CD4-positive, alpha-beta memory T cell (primary cell): ENCODE measurements at regions of chrX and their contacts with region 1.

Region 1: GRCh38 chrX:39261446-39262147 is 460.3 kb downstream of the MID1IP1 start:
- DNase-seq: peak; percentile 28 to 47 (median 34)
- H3K4me3 ChIP-seq: no peak overlapping the region
- H3K4me3 Mint-ChIP-seq: no peak overlapping the region
- H3K27ac ChIP-seq: no peak overlapping the region
- H3K27ac Mint-ChIP-seq: peak overlapping the region in 3 of 7 donors; percentile 7 to 68 (median 27)
- H3K4me1 ChIP-seq: no peaks in the 10 kb centered on the region
- H3K4me1 Mint-ChIP-seq: peaks cover 0 to 6% (median 5%) of the 10 kb centered on the region in 4 donors
- H3K27me3 ChIP-seq: no peaks in the 10 kb centered on the region
- H3K27me3 Mint-ChIP-seq: no peaks in the 10 kb centered on the region

Region 2: GRCh38 chrX:39309018-39309635 is 47.5 kb after region 1 on chrX:
- CTCF ChIA-PET with region 1: no interaction called
- POLR2A ChIA-PET with region 1: interaction called, 3 read pairs
- intact Hi-C with region 1: loop called (anchors 5 kb)
- DNase-seq: peak; percentile 17 to 82 (median 36)
- H3K4me3 ChIP-seq: no peak overlapping the region
- H3K4me3 Mint-ChIP-seq: peak overlapping the region in 7 of 8 donors; percentile 37 to 86 (median 62)
- H3K27ac ChIP-seq: peak overlapping the region; percentile 69
- H3K27ac Mint-ChIP-seq: peak overlapping the region; percentile 91 to 99 (median 96)
- H3K4me1 ChIP-seq: peaks cover 54% of the 10 kb centered on the region
- H3K4me1 Mint-ChIP-seq: peaks cover 28 to 62% (median 48%) of the 10 kb centered on the region in 4 donors
- H3K27me3 ChIP-seq: no peaks in the 10 kb centered on the region
- H3K27me3 Mint-ChIP-seq: no peaks in the 10 kb centered on the region

Region 3: DNA sequence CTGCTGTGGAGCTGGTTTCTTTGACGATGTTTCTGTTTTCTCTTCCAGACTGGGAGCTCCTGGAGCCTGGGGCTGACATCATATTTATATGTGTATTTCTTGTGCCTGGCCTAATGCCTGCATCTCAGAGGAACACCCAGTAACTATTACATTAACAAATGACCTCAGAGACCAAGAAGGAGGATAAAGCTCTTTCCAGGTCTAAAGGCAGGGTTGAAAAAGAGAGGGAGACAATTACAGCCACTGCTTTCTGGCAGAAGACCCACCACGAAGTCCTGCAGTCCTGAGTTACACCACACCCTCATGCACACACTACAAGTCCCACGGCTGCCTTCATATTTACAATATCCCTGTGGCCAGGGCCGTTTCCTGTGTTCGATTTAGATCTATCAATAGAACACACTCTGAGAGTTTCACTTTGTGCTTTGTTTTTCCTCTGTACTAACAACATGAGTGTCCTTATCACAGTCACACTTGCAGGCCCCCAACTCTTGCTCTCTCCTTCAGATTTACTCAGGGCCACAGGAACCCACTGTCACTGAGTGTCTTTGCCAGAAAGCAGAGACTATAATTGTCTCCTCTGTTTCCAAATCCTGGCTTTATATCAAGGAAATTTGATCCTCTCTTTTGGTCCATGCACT is 75.2 kb after region 1 on chrX:
- CTCF ChIA-PET with region 1: interaction called, 3 read pairs
- POLR2A ChIA-PET with region 1: no interaction called
- intact Hi-C with region 1: loop called (anchors 10 kb)
- DNase-seq: peak in 3 of 5 donors; percentile 14 to 32 (median 15)
- H3K4me3 ChIP-seq: peak overlapping the region in 1 of 2 donors; percentile 14
- H3K4me3 Mint-ChIP-seq: peak overlapping the region in 7 of 8 donors; percentile 53 to 80 (median 62)
- H3K27ac ChIP-seq: peak overlapping the region; percentile 25
- H3K27ac Mint-ChIP-seq: peak overlapping the region; percentile 60 to 93 (median 86)
- H3K4me1 ChIP-seq: peaks cover 35% of the 10 kb centered on the region
- H3K4me1 Mint-ChIP-seq: peaks cover 24 to 37% (median 31%) of the 10 kb centered on the region in 4 donors
- H3K27me3 ChIP-seq: no peaks in the 10 kb centered on the region
- H3K27me3 Mint-ChIP-seq: no peaks in the 10 kb centered on the region

Region 4: GRCh38 chrX:39445336-39445735 is 183.7 kb after region 1 on chrX:
- CTCF ChIA-PET with region 1: interaction called, 16 read pairs
- POLR2A ChIA-PET with region 1: no interaction called
- intact Hi-C with region 1: loop called (anchors 1 kb)
- DNase-seq: peak; percentile 12 to 38 (median 18)
- H3K4me3 ChIP-seq: no peak overlapping the region
- H3K4me3 Mint-ChIP-seq: no peak overlapping the region
- H3K27ac ChIP-seq: no peak overlapping the region
- H3K27ac Mint-ChIP-seq: no peak overlapping the region
- H3K4me1 ChIP-seq: peaks cover 4% of the 10 kb centered on the region
- H3K4me1 Mint-ChIP-seq: peaks cover 2 to 10% (median 8%) of the 10 kb centered on the region in 4 donors
- H3K27me3 ChIP-seq: no peaks in the 10 kb centered on the region
- H3K27me3 Mint-ChIP-seq: no peaks in the 10 kb centered on the region